ENCODE measurements at regions of chr7 and their contacts with region 1.

Region 1: GRCh38 chr7:130205084-130205947 is at the start of gene TMEM209:
- DNase-seq: peak; percentile 98
- H3K4me3 Mint-ChIP-seq: peak within 1 kb of the TSS; percentile 93
- H3K27ac Mint-ChIP-seq: peak within 1 kb of the TSS; percentile 98
- H3K4me1 Mint-ChIP-seq: peaks cover 25% of the 10 kb centered on the region
- H3K27me3 Mint-ChIP-seq: no peaks in the 10 kb centered on the region
- total RNA-seq, gene TMEM209: 48.2 and 52.9 TPM in 2 replicates

Region 2: GRCh38 chr7:130050773-130051125 is 154.6 kb before region 1 on chr7:
- intact Hi-C with region 1: loop called (anchors 1 kb)
- DNase-seq: no peak
- H3K4me3 Mint-ChIP-seq: peak overlapping the region; percentile 99
- H3K27ac Mint-ChIP-seq: peak overlapping the region; percentile 98
- H3K4me1 Mint-ChIP-seq: peaks cover 10% of the 10 kb centered on the region
- H3K27me3 Mint-ChIP-seq: no peaks in the 10 kb centered on the region

Region 3: GRCh38 chr7:130182990-130183389 is 22.3 kb before region 1 on chr7:
- intact Hi-C with region 1: loop called (anchors 1 kb)
- DNase-seq: no peak
- H3K4me3 Mint-ChIP-seq: no peak overlapping the region
- H3K27ac Mint-ChIP-seq: peak overlapping the region; percentile 78
- H3K4me1 Mint-ChIP-seq: peaks cover 20% of the 10 kb centered on the region
- H3K27me3 Mint-ChIP-seq: no peaks in the 10 kb centered on the region

Region 4: DNA sequence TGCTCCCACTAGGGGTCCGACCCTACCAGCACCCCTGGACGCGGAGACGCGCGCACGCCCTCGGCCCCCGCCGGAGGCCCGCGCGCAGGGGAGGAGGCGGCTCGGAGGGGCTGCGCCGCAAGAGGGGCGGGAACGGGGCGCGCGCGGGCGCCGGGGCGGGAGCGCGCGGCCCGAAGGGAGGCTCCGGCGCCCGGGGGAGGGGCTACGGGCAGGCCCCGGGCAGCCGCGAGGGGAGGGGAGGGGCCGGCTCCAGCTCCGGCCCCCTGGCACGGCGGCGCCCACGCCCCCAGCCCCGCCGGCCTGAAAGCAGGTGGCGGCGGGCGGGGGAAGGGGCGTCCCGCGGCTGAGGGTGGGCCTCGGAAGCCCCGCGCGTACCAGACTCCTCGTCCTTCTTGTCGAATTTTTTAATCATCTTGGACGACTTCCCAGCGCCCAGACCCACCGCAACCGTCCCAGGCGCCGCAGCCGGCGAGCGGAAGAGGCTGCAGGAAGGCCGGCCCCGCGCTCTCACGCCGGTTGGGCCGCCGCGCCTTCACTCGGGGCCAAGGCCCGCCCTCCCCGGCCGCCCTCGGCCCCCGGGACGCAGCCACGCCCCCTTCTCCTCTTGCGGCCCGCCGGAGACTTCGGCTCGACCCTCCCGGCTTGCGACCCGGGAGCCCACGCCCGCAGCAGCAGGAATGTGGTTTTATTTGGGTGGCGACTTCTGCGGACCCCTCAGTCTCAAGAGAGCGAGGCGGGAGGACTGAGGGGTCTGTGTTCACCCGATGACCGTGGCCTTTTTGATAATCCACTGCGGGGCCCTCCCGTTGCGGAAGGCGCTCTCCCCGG is 463.2 kb after region 1 on chr7 and contains the start of gene COPG2:
- intact Hi-C with region 1: loop called (anchors 1 kb)
- DNase-seq: peak; percentile 95
- H3K4me3 Mint-ChIP-seq: peak within 1 kb of the TSS; percentile 85
- H3K27ac Mint-ChIP-seq: peak within 1 kb of the TSS; percentile 84
- H3K4me1 Mint-ChIP-seq: peaks cover 19% of the 10 kb centered on the region
- H3K27me3 Mint-ChIP-seq: peaks cover 12% of the 10 kb centered on the region
- total RNA-seq, gene COPG2: 21.4 and 22.5 TPM in 2 replicates

Measured in activated CD4-positive, alpha-beta T cell treated with anti-CD3 and anti-CD28 coated beads, Interleukin-2, amount 10 ng/mL, durations not matched to agents 24 days and 14 days (primary cell).